ENCODE measurements at regions of chr10 and their contacts with region 1.

Region 1: DNA sequence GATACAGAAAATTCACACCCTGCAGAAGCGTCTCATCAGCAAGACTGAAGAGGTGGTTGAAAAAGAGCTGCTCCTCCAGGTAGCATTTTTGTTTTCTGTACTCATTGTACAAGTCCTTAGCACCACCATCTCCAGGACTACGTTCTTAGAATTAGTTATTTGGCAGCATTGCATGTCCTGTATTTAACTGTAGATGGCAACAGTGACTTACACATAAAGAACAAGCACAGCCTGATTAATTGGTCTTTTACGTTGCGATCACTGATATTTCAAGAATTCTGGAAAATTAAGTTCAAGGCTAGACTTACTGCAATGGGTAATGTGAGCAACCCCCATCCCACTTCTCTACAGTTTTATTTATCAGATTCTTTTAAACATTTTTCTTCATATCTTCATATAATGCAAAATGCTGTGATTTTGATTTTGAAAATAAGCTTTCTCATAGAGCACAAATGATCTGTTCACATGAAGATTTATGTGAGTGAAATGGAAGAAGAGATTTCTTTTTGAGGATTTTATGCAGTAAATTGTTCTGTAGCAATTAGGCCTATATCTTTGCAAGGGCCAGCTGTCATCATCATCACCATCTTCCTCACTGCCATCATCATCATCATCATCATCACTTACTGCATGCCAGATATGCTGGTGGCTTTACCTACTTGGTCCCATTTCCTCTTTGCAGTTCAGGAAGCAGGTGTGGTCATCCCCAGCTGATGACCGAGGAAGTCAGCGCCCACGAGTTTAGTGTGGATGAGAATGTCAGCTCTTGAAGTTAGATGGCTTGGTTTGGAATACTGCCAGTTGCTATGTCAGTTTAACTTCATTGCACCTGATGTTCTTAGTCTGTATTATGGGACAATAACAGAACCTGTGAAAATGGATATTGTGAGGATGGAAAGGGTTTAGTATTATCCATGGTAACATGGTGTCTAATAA is 53.4 kb downstream of the CFAP58 start:
- DNase-seq: no peak
- H3K4me3 ChIP-seq: no peak overlapping the region
- H3K27ac ChIP-seq: no peak overlapping the region
- H3K4me1 ChIP-seq: no peaks in the 10 kb centered on the region
- H3K27me3 ChIP-seq: no peaks in the 10 kb centered on the region
- CTCF ChIP-seq: peak; percentile 67

Region 2: DNA sequence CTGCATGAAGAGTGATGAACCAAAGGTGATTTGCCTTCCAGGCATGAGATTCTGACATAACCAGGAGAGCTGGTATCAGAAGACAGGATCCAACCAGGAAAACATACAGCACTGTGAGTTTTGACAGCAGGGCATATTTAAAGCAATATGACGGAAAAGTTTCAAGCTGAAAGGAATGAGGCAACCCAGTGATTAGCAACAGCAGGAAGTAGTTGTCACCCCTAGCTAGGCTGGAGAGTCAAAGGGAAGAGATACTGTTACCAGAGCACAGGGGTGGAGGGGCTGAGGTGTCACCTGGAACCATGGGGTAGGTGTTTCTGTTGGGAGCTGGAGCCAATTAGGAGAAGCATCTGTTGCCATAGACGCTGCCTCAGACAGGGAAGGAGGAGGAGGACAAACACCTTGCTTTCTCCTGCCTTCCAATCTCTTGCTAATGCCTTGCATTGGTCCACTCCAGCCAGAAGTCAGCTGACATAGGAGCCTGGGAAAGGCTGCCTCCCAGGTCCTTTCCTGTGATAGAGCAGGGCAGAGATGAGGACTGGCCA is 108.8 kb after region 1 on chr10:
- intact Hi-C with region 1: no loop called
- DNase-seq: no peak
- H3K4me3 ChIP-seq: no peak overlapping the region
- H3K27ac ChIP-seq: no peak overlapping the region
- H3K4me1 ChIP-seq: no peaks in the 10 kb centered on the region
- H3K27me3 ChIP-seq: peaks cover 73% of the 10 kb centered on the region
- CTCF ChIP-seq: no peak

Region 3: GRCh38 chr10:104614245-104614831 is 207.4 kb after region 1 on chr10:
- intact Hi-C with region 1: loop called (anchors 10 kb)
- DNase-seq: no peak
- H3K4me3 ChIP-seq: no peak overlapping the region
- H3K27ac ChIP-seq: no peak overlapping the region
- H3K4me1 ChIP-seq: no peaks in the 10 kb centered on the region
- H3K27me3 ChIP-seq: peaks cover 25% of the 10 kb centered on the region
- CTCF ChIP-seq: peak; percentile 43

Measured in left ventricle myocardium inferior (tissue), 1 donor.